ENCODE measurements at regions of chr12 and their contacts with region 1.

Region 1: GRCh38 chr12:108803428-108804105 is 53.8 kb downstream of the SSH1 start:
- DNase-seq: peak in 6 of 10 donors; percentile 56 to 94 (median 76)

Region 2: DNA sequence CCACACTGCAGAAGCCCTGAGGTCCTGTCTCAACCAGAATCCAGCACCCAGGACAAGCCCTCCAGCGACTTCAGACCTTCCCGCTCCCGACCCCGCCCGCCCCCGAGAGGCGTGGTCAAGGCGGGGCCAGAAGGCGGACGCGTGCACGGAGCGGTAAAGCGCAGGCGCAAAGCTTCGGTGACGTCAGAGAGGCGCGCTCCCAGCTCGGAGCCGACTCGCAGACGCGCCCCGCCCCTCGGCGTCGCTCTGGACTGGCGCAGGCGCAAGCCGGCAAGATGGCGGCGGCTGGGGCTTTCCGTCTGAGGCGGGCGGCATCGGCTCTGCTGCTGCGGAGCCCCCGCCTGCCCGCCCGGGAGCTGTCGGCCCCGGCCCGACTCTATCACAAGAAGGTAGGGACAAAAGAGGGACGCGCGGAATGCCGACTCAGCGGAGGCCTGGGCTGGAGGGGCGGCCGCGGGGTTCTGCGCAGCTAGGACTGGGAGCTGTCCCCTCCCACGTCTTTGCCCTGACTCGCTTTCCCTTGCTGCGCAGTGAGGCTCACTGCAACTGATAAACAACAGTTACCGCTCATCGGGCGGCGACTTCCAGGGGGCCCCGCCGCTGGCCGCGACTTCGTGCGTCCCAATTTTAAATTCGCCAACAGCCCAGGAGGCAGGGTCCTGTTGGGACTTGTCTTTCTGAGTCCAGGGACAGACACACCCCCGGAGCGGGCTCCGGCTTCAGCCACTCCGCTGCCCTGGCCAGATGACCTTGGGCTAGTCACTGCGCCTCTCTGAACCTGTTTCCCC is 241.0 kb before region 1 on chr12 and contains the start of gene ISCU:
- intact Hi-C with region 1: loop called (anchors 2 kb)
- DNase-seq: peak; percentile 96 to 100 (median 98)

Region 3: GRCh38 chr12:108664338-108665258 is 139.0 kb before region 1 on chr12:
- intact Hi-C with region 1: loop called (anchors 1 kb)
- DNase-seq: peak; percentile 58 to 96 (median 81)

Region 4: GRCh38 chr12:108691175-108691997 is 112.2 kb before region 1 on chr12:
- intact Hi-C with region 1: loop called (anchors 5 kb)
- DNase-seq: peak; percentile 88 to 99 (median 90)

Region 5: DNA sequence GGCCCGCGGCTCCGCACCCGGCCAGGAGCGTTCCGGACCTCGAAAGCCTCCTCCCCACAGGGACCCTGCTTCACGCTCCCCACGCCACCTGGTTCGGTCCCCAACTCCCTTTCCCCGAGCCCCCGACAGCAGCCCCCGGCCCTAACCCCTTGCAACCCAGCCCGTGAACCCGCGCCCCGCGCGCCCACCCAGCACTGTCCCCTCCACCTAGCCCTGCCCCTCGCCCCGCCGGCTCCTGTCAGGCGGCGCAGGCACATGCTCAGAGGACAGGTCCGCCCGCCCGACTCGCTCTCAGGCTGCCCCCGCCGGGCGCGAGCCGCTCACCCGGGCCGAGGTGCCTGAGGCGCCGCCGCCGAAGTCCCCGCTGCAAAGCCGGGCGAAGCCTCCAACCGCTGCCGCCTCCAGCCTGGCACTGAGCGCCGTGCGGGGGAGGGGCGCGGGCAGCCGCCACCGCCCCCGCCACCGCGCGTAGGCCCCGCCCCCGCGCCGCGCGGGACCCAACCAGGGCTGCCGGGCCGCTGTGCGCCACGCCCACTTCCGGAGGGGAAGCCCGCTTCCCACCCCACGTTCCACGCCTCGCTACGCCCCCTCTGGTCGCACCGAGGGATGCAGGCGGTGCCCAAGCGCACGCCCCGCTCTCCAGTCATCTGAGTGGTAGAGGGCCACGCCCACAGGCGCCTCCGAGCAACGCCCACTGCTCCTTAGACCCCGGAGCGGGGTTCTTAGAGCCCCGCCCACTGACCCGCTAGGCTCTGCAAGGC is 72.3 kb before region 1 on chr12 and contains the start of gene CORO1C:
- intact Hi-C with region 1: loop called (anchors 2 kb)
- DNase-seq: peak; percentile 87 to 99 (median 92)

Region 6: GRCh38 chr12:108856428-108857157 is 53.0 kb after region 1 on chr12:
- intact Hi-C with region 1: loop called (anchors 10 kb)
- DNase-seq: peak in 9 of 10 donors; percentile 41 to 92 (median 59)

Measured in posterior cingulate gyrus (tissue), 11 donors.